CD8-positive, alpha-beta T cell (primary cell): ENCODE measurements at regions of chr20 and their contacts with region 1.

Region 1: GRCh38 chr20:43590392-43591323 is at the start of gene IFT52:
- DNase-seq: peak; percentile 79 to 96 (median 89)
- ATAC-seq: peak; percentile 98
- H3K4me3 ChIP-seq: peak within 1 kb of the TSS; percentile 62 to 88
- H3K4me3 Mint-ChIP-seq: peak within 1 kb of the TSS; percentile 91
- H3K27ac ChIP-seq: peak within 1 kb of the TSS; percentile 74 to 96
- H3K27ac Mint-ChIP-seq: peak within 1 kb of the TSS; percentile 96
- H3K4me1 ChIP-seq: peaks cover 13% of the 10 kb centered on the region
- H3K4me1 Mint-ChIP-seq: peaks cover 20% of the 10 kb centered on the region
- H3K27me3 ChIP-seq: no peaks in the 10 kb centered on the region
- H3K27me3 Mint-ChIP-seq: peaks cover 3% of the 10 kb centered on the region
- CTCF ChIP-seq: no peak
- total RNA-seq, gene IFT52: 11.5 to 14.1 TPM

Region 2: DNA sequence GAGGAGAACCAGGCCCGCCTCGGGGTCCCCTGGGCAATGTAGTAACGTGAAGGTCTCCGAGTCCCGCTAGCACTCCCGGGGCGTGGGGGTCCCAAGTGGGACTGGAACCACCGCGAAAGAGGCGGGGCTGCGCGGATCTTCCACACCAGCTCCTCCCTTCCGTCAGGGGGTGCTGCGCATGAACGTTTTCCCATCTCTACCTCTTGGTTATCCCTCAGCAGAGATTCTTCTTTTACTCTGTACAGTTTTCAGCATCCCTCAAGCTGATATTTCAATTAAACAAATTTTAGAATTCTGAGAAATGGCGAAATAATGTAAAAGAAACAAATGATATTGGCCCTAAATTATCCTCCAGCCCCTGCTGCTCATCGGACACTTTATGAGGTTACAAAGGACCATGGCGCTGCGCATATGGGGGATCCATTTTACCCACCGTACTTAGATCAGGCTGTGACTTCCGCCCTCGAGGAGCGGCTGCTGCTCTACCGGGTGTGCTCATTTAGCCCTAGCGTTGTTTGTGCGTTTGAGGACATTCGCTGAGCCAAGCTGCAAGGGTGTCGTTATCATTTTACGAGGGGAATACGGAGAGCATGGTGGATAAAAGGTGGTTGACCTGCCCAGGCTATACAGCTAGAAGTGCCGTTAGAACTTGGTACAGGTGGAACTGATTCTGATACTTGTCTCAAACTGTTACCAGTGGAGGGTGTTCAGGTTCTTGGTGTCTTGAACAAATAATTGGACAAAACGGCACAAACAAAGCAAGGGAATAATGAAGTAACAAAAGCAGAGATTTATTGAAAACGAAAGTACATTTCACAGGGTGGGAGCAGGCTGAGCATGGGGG is 1897.3 kb before region 1 on chr20:
- CTCF ChIA-PET with region 1: no interaction called
- POLR2A ChIA-PET with region 1: no interaction called
- intact Hi-C with region 1: loop called in 1 of 2 experiments (anchors 10 kb)
- DNase-seq: peak; percentile 60 to 94 (median 80)
- ATAC-seq: peak; percentile 86
- H3K4me3 ChIP-seq: peak overlapping the region; percentile 92 to 97
- H3K4me3 Mint-ChIP-seq: peak overlapping the region; percentile 87
- H3K27ac ChIP-seq: peak overlapping the region; percentile 86 to 91
- H3K27ac Mint-ChIP-seq: peak overlapping the region; percentile 93
- H3K4me1 ChIP-seq: peaks cover 10% of the 10 kb centered on the region
- H3K4me1 Mint-ChIP-seq: peaks cover 18% of the 10 kb centered on the region
- H3K27me3 ChIP-seq: no peaks in the 10 kb centered on the region
- H3K27me3 Mint-ChIP-seq: peaks cover 4% of the 10 kb centered on the region
- CTCF ChIP-seq: peak; percentile 40

Region 3: GRCh38 chr20:42938441-42939205 is 652.0 kb before region 1 on chr20:
- CTCF ChIA-PET with region 1: no interaction called
- POLR2A ChIA-PET with region 1: no interaction called
- intact Hi-C with region 1: no loop called
- DNase-seq: no peak
- ATAC-seq: no peak
- H3K4me3 ChIP-seq: no peak overlapping the region
- H3K4me3 Mint-ChIP-seq: no peak overlapping the region
- H3K27ac ChIP-seq: no peak overlapping the region
- H3K27ac Mint-ChIP-seq: no peak overlapping the region
- H3K4me1 ChIP-seq: no peaks in the 10 kb centered on the region
- H3K4me1 Mint-ChIP-seq: no peaks in the 10 kb centered on the region
- H3K27me3 ChIP-seq: no peaks in the 10 kb centered on the region
- H3K27me3 Mint-ChIP-seq: no peaks in the 10 kb centered on the region
- CTCF ChIP-seq: no peak

Region 4: GRCh38 chr20:43456809-43457639 is 133.6 kb before region 1 on chr20:
- CTCF ChIA-PET with region 1: no interaction called
- POLR2A ChIA-PET with region 1: interaction called, 9 read pairs
- intact Hi-C with region 1: loop called (anchors 1 kb)
- DNase-seq: peak; percentile 68 to 94 (median 87)
- ATAC-seq: peak; percentile 79
- H3K4me3 ChIP-seq: peak overlapping the region; percentile 97 to 100
- H3K4me3 Mint-ChIP-seq: peak overlapping the region; percentile 92
- H3K27ac ChIP-seq: peak overlapping the region; percentile 98 to 100
- H3K27ac Mint-ChIP-seq: peak overlapping the region; percentile 98
- H3K4me1 ChIP-seq: peaks cover 16% of the 10 kb centered on the region
- H3K4me1 Mint-ChIP-seq: peaks cover 36% of the 10 kb centered on the region
- H3K27me3 ChIP-seq: no peaks in the 10 kb centered on the region
- H3K27me3 Mint-ChIP-seq: peaks cover 8% of the 10 kb centered on the region
- CTCF ChIP-seq: no peak

Region 5: GRCh38 chr20:43514062-43514999 is 76.3 kb before region 1 on chr20:
- CTCF ChIA-PET with region 1: no interaction called
- POLR2A ChIA-PET with region 1: no interaction called
- intact Hi-C with region 1: loop called in 1 of 2 experiments (anchors 1 kb)
- DNase-seq: peak; percentile 74 to 97 (median 89)
- ATAC-seq: peak; percentile 92
- H3K4me3 ChIP-seq: peak overlapping the region; percentile 65 to 72
- H3K4me3 Mint-ChIP-seq: peak overlapping the region; percentile 90
- H3K27ac ChIP-seq: peak overlapping the region; percentile 33 to 50
- H3K27ac Mint-ChIP-seq: peak overlapping the region; percentile 86
- H3K4me1 ChIP-seq: peaks cover 12% of the 10 kb centered on the region
- H3K4me1 Mint-ChIP-seq: peaks cover 20% of the 10 kb centered on the region
- H3K27me3 ChIP-seq: no peaks in the 10 kb centered on the region
- H3K27me3 Mint-ChIP-seq: peaks cover 3% of the 10 kb centered on the region
- CTCF ChIP-seq: no peak

Region 6: GRCh38 chr20:43666376-43667328 is 76.0 kb after region 1 on chr20 and contains the start of gene MYBL2:
- CTCF ChIA-PET with region 1: no interaction called
- POLR2A ChIA-PET with region 1: no interaction called
- intact Hi-C with region 1: loop called (anchors 2 kb)
- DNase-seq: peak; percentile 49 to 82 (median 66)
- ATAC-seq: peak; percentile 97
- H3K4me3 ChIP-seq: peak within 1 kb of the TSS; percentile 32 to 58
- H3K4me3 Mint-ChIP-seq: peak within 1 kb of the TSS; percentile 54
- H3K27ac ChIP-seq: no peak within 1 kb of the TSS
- H3K27ac Mint-ChIP-seq: no peak within 1 kb of the TSS
- H3K4me1 ChIP-seq: peaks cover 8% of the 10 kb centered on the region
- H3K4me1 Mint-ChIP-seq: peaks cover 2% of the 10 kb centered on the region
- H3K27me3 ChIP-seq: peaks cover 10 to 16% of the 10 kb centered on the region in 2 experiments
- H3K27me3 Mint-ChIP-seq: peaks cover 22% of the 10 kb centered on the region
- CTCF ChIP-seq: no peak
- total RNA-seq, gene MYBL2: 0.49 to 1.1 TPM

Region 7: DNA sequence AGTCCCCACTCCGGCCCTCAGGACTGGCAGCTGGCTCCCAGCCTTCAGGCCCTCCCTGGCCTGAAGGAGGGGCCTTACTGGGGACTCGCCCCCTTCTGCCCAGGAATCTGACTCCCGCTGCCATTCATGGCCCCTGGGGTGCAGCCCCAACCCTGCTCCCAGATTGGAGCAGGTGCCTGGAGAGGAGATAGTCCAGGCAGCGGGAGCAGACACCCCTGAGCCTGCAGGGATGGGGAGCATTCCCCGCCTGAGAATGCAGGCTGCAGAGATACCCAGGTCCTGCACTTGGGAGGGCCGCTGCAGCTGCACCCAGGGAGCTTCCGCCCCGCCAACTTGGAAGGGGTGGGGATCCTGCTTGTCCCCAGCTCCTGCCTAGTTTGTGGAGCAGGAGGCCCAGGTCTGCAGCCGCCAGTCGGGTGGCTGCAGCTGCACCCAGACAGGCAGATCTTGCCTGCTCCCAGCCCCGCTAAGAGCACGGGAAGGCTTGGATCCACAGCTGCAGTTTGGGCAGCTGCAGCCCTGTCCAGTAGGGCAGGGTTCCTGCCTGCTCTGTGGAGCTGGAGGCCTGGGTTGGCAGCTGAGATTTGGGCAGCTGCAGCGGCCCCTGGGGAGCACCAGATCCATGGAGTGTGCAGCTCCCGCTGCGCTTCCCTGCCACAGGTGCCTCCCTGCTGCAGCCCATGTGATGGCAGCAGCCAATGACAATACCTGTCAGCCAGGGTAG is 130.9 kb after region 1 on chr20:
- CTCF ChIA-PET with region 1: no interaction called
- POLR2A ChIA-PET with region 1: no interaction called
- intact Hi-C with region 1: loop called in 1 of 2 experiments (anchors 5 kb)
- DNase-seq: no peak
- ATAC-seq: no peak
- H3K4me3 ChIP-seq: peak overlapping the region; percentile 20 to 31
- H3K4me3 Mint-ChIP-seq: peak overlapping the region; percentile 48
- H3K27ac ChIP-seq: no peak overlapping the region
- H3K27ac Mint-ChIP-seq: peak overlapping the region; percentile 76
- H3K4me1 ChIP-seq: peaks cover 61% of the 10 kb centered on the region
- H3K4me1 Mint-ChIP-seq: peaks cover 61% of the 10 kb centered on the region
- H3K27me3 ChIP-seq: no peaks in the 10 kb centered on the region
- H3K27me3 Mint-ChIP-seq: no peaks in the 10 kb centered on the region
- CTCF ChIP-seq: no peak

Region 8: GRCh38 chr20:44092551-44093248 is 502.0 kb after region 1 on chr20:
- CTCF ChIA-PET with region 1: no interaction called
- POLR2A ChIA-PET with region 1: no interaction called
- intact Hi-C with region 1: no loop called
- DNase-seq: peak in 4 of 9 experiments; percentile 32 to 55 (median 42)
- ATAC-seq: no peak
- H3K4me3 ChIP-seq: no peak overlapping the region
- H3K4me3 Mint-ChIP-seq: no peak overlapping the region
- H3K27ac ChIP-seq: no peak overlapping the region
- H3K27ac Mint-ChIP-seq: no peak overlapping the region
- H3K4me1 ChIP-seq: no peaks in the 10 kb centered on the region
- H3K4me1 Mint-ChIP-seq: no peaks in the 10 kb centered on the region
- H3K27me3 ChIP-seq: no peaks in the 10 kb centered on the region
- H3K27me3 Mint-ChIP-seq: peaks cover 17% of the 10 kb centered on the region
- CTCF ChIP-seq: peak; percentile 49

Region 9: GRCh38 chr20:44475694-44476560 is 885.3 kb after region 1 on chr20 and contains the start of gene TTPAL:
- CTCF ChIA-PET with region 1: no interaction called
- POLR2A ChIA-PET with region 1: no interaction called
- intact Hi-C with region 1: loop called in 1 of 2 experiments (anchors 10 kb)
- DNase-seq: peak; percentile 72 to 95 (median 88)
- ATAC-seq: peak; percentile 96
- H3K4me3 ChIP-seq: peak within 1 kb of the TSS; percentile 82 to 90
- H3K4me3 Mint-ChIP-seq: peak within 1 kb of the TSS; percentile 86
- H3K27ac ChIP-seq: peak within 1 kb of the TSS; percentile 94 to 96
- H3K27ac Mint-ChIP-seq: peak within 1 kb of the TSS; percentile 95
- H3K4me1 ChIP-seq: peaks cover 16% of the 10 kb centered on the region
- H3K4me1 Mint-ChIP-seq: peaks cover 27% of the 10 kb centered on the region
- H3K27me3 ChIP-seq: no peaks in the 10 kb centered on the region
- H3K27me3 Mint-ChIP-seq: no peaks in the 10 kb centered on the region
- CTCF ChIP-seq: peak; percentile 26
- total RNA-seq, gene TTPAL: 12.3 TPM